B cell (primary cell): ENCODE measurements at regions of chr17 and their contacts with region 1.

Region 1: DNA sequence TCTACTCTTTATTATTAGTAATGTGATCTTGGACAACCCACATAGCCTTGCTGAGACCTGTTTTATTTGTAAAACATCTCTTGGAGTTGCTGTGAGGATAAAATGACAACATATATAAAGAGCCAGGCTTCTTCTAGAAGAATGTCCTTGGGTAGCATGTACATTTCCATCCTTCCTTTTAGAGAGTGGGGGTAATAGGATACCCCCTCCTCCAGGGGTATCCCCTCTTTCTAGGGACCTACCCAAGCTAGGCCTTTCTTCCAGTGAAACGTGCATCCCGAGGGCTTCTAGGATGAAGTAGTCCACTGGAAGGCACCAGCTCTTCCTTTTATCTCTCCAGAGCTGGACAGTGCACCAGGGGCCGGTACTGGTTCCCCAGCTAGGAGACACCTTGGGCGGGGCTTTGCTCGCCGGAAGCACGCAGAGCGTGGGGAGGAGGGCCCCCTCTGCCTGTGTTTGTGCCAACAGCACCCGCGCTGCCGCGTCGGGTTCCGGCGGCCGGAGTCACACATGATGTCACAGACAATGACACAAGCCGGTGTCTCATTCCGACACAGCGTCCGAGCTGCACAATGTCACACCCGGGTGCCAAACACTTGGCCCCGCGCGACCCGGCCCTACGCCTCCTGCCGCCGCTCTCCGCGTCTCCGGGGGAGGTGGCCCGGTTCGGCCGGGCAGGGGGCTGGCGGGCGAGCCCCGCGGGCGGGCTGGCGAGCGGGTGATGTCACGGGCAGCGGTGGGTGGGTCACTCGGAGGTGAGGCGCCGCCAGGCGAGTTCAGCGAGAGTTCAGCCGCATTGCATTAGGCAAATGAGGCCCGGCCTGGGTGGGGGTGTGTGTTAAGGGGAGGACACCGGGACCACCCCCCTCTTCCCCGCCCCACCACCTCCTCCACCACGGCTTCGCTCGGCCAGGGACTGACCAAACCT is 23.4 kb downstream of the GJD3 start:
- DNase-seq: peak; percentile 95
- ATAC-seq: peak; percentile 76
- H3K4me3 ChIP-seq: peak overlapping the region; percentile 51 to 84 (median 71)
- H3K4me3 Mint-ChIP-seq: peak overlapping the region; percentile 91
- H3K27ac ChIP-seq: peak overlapping the region; percentile 67 to 88
- H3K27ac Mint-ChIP-seq: peak overlapping the region; percentile 92
- H3K4me1 ChIP-seq: peaks cover 70 to 85% of the 10 kb centered on the region in 2 donors
- H3K4me1 Mint-ChIP-seq: peaks cover 74% of the 10 kb centered on the region
- H3K27me3 ChIP-seq: no peaks in the 10 kb centered on the region
- H3K27me3 Mint-ChIP-seq: no peaks in the 10 kb centered on the region
- CTCF ChIP-seq: no peak

Region 2: DNA sequence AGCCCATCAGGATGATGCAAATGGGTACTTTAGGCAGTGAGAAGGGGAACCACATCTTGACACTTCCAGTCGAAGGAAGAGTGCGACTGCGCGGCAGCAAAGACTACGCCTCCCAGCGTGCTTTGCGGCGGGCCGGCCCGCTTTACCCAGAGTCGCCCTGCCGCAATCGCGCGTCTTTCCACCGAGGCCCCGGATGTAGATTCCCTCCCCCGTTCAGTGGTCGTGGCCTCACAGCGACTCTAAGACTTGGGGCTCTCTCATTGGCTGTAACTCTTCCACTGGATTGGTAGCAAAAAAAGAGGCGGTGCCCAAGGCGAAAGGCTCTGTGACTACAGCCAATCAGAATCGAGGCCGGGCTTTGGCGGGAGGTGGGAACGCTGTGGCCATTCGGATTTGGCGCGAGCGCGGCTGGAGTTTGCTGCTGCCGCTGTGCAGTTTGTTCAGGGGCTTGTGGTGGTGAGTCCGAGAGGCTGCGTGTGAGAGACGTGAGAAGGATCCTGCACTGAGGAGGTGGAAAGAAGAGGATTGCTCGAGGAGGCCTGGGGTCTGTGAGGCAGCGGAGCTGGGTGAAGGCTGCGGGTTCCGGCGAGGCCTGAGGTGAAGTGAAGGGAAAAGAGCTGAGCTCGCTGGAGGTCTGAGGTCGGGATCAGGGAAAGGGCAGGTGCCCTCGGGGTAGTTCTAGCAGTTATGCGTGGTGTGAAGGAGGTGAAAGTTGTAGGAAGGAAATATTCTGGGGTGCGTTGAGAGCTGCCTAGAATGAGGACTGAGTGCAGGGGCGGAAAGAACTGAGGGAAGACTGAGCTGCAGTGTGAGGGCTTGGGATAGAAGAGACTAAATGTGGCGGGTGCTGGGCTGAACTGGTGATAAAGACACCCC is 53.4 kb before region 1 on chr17 and contains the start of gene CDC6:
- CTCF ChIA-PET with region 1: no interaction called
- POLR2A ChIA-PET with region 1: no interaction called
- intact Hi-C with region 1: no loop called
- DNase-seq: peak; percentile 99
- ATAC-seq: peak; percentile 95
- H3K4me3 ChIP-seq: peak within 1 kb of the TSS; percentile 27 to 85 (median 69)
- H3K4me3 Mint-ChIP-seq: peak within 1 kb of the TSS; percentile 97
- H3K27ac ChIP-seq: peak within 1 kb of the TSS in 1 of 2 donors; percentile 42
- H3K27ac Mint-ChIP-seq: peak within 1 kb of the TSS; percentile 70
- H3K4me1 ChIP-seq: peaks cover 9 to 11% of the 10 kb centered on the region in 2 donors
- H3K4me1 Mint-ChIP-seq: peaks cover 15% of the 10 kb centered on the region
- H3K27me3 ChIP-seq: no peaks in the 10 kb centered on the region
- H3K27me3 Mint-ChIP-seq: no peaks in the 10 kb centered on the region
- CTCF ChIP-seq: no peak
- total RNA-seq, gene CDC6: 0.63 and 2.2 TPM in 2 replicates

Region 3: GRCh38 chr17:40309031-40309948 is 31.9 kb before region 1 on chr17 and contains the start of gene RARA:
- CTCF ChIA-PET with region 1: interaction called, 39 read pairs
- POLR2A ChIA-PET with region 1: interaction called, 9 read pairs
- intact Hi-C with region 1: no loop called
- DNase-seq: peak; percentile 61
- ATAC-seq: peak; percentile 69
- H3K4me3 ChIP-seq: peak within 1 kb of the TSS; percentile 13 to 45 (median 44)
- H3K4me3 Mint-ChIP-seq: no peak within 1 kb of the TSS
- H3K27ac ChIP-seq: no peak within 1 kb of the TSS
- H3K27ac Mint-ChIP-seq: no peak within 1 kb of the TSS
- H3K4me1 ChIP-seq: peaks cover 45 to 48% of the 10 kb centered on the region in 2 donors
- H3K4me1 Mint-ChIP-seq: peaks cover 13% of the 10 kb centered on the region
- H3K27me3 ChIP-seq: no peaks in the 10 kb centered on the region
- H3K27me3 Mint-ChIP-seq: no peaks in the 10 kb centered on the region
- CTCF ChIP-seq: no peak
- total RNA-seq, gene RARA: 85.5 and 86.2 TPM in 2 replicates

Region 4: DNA sequence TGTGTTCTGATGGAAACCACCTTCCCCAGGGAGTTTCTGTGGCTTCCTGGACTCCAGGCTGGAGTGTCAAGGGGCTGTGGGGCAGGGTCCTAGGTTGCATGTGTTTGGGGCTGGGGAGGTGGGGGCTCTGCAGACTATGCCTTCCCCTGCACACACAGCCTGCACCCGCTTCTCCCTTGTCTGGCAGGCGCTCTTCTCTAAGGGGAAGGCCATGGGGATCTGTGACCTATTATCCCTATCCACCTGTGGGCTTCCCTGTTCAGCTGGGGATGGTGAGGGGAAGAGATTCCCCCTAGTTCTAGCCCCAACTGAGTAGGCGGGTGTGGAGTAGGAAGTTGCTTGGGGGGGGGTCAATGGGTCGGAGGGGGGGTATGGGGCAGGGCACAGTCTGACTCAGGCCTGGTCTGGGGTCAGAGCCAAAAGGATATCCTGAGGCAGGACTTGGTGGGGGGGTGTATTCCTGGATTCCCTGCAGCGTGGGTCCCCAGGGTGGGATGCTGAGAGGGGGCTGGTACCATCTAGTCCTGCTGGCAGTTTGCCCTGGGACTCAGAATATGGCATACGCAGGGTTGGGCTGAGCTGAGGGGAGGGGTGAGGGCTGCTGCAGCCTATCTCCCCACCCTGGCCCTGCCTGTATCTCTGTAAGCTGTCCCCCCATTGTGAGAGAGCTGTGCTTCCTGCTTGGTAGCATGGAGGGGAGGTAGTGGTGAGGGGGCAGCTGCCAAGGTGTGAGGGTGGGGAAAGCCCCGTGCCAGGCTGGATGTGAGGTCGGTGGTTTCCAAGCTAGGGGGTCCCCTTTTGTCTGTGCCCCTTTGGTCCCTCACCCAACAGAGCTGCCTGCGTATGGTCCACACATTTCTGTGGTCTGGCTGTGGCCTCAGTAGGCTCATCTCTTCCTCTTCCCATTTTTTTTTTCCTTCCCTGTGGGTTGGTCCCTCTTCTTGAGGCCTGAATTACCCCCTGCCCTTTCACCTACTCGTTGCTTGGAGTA is 17.5 kb before region 1 on chr17:
- CTCF ChIA-PET with region 1: interaction called, 119 read pairs
- POLR2A ChIA-PET with region 1: interaction called, 96 read pairs
- intact Hi-C with region 1: loop called (anchors 1 kb)
- DNase-seq: peak; percentile 94
- ATAC-seq: peak; percentile 32
- H3K4me3 ChIP-seq: peak overlapping the region; percentile 48 to 94 (median 67)
- H3K4me3 Mint-ChIP-seq: peak overlapping the region; percentile 97
- H3K27ac ChIP-seq: peak overlapping the region; percentile 96
- H3K27ac Mint-ChIP-seq: peak overlapping the region; percentile 100
- H3K4me1 ChIP-seq: peaks cover 92 to 100% of the 10 kb centered on the region in 2 donors
- H3K4me1 Mint-ChIP-seq: peaks cover 95% of the 10 kb centered on the region
- H3K27me3 ChIP-seq: no peaks in the 10 kb centered on the region
- H3K27me3 Mint-ChIP-seq: no peaks in the 10 kb centered on the region
- CTCF ChIP-seq: no peak